ENCODE measurements at regions of chr16 and their contacts with region 1.

Region 1: GRCh38 chr16:22659933-22660332 is 149.2 kb downstream of the NPIPB5 start:
- DNase-seq: no peak
- ATAC-seq: no peak
- H3K4me3 ChIP-seq: no peak overlapping the region
- H3K27ac ChIP-seq: no peak overlapping the region
- H3K4me1 ChIP-seq: no peaks in the 10 kb centered on the region
- H3K27me3 ChIP-seq: peaks cover 0 to 35% (median 28%) of the 10 kb centered on the region in 7 donors
- CTCF ChIP-seq: no peak

Region 2: DNA sequence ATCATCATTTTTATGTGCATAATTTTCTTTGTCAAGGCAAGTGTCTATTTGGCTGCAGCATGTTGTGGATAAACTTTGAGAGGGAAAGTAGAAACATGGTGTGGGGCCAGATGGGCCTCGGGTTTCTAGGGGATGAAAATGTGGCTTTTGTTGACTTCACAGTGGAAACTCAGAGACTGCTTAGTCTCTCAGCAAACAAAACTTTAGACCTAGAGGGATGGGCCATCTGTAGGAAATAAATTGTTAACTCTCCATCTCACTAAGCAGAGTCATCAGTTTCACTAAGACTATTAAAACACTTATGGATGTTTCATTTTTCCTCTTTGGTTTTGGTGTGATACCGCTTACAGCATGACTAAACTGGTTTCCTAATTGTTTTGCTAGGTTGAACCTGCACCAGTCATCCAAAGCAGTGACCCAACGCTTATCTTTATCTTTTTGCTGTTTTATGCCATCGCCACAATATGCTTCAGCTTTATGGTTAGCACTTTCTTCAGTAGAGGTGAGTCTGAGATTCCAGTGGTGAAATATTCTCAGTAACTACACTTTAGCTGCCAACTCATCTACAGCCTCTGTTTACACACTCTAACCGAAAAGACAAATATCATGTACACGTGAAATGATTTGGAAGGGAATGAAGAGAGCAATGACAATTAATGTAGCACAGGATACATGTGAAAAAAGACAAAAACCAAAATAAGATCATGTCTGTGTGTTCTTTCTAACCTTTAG is 1321.2 kb before region 1 on chr16:
- intact Hi-C with region 1: loop called in 1 of 10 experiments (anchors 5 kb)
- DNase-seq: no peak
- ATAC-seq: no peak
- H3K4me3 ChIP-seq: no peak overlapping the region
- H3K27ac ChIP-seq: no peak overlapping the region
- H3K4me1 ChIP-seq: no peaks in the 10 kb centered on the region
- H3K27me3 ChIP-seq: no peaks in the 10 kb centered on the region
- CTCF ChIP-seq: no peak

Region 3: DNA sequence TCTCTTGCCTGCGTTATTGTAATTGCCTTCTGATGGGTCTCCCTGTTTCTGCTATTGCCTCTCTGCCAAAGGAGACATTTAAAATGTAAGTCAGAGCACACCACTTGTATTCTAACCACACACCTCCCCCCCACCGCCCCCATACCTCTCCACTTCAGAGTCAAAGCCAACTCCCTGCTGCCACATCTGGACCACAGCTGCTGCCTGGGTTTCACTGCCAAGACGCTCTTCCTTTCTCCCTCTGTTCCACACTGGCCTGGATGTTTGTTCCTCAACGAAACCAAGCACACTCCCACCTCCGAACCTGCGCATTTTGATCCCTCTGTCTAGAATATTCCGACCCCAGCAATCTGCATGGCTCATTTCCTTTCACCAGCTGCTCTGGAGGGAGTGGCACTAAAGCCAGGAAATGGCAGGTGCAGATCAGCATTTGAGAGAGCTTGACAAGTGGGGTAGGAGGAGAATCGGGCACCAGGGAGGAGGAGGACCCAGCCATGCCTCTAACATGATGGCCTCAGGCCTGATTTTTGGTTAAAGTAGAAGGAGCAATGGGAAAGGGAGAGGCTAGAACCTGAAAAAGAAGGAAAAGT is 61.7 kb after region 1 on chr16:
- intact Hi-C with region 1: no loop called
- DNase-seq: peak in 1 of 2 donors; percentile 5
- ATAC-seq: peak in 6 of 8 donors; percentile 55 to 84 (median 76)
- H3K4me3 ChIP-seq: no peak overlapping the region
- H3K27ac ChIP-seq: no peak overlapping the region
- H3K4me1 ChIP-seq: no peaks in the 10 kb centered on the region
- H3K27me3 ChIP-seq: peaks cover 0 to 24% (median 5%) of the 10 kb centered on the region in 7 donors
- CTCF ChIP-seq: no peak

Measured in heart right ventricle (tissue), 16 donors.